K562 (cell line): ENCODE measurements at regions of chr18 and their contacts with region 1.

Region 1: GRCh38 chr18:305003-305501 is 37.2 kb upstream of the THOC1 start:
- DNase-seq: no peak
- ATAC-seq: peak; percentile 46
- H3K4me3 ChIP-seq: no peak overlapping the region
- H3K27ac ChIP-seq: no peak overlapping the region
- H3K4me1 ChIP-seq: peaks cover 0 to 19% of the 10 kb centered on the region in 2 experiments; a peak in 4 of 5 replicates
- H3K27me3 ChIP-seq: peaks cover 3 to 10% of the 10 kb centered on the region in 2 experiments; a peak in 2 of 5 replicates
- CTCF ChIP-seq: no peak
- EP300 ChIP-seq: no peak
- POLR2A ChIP-seq: no peak
- RAD21 ChIP-seq: no peak

Region 2: GRCh38 chr18:199768-200167 is 105.3 kb before region 1 on chr18:
- CTCF ChIA-PET with region 1: no interaction called
- POLR2A ChIA-PET with region 1: no interaction called
- in situ Hi-C with region 1: no loop called
- intact Hi-C with region 1: no loop called
- DNase-seq: no peak
- ATAC-seq: no peak
- H3K4me3 ChIP-seq: no peak overlapping the region
- H3K27ac ChIP-seq: no peak overlapping the region
- H3K4me1 ChIP-seq: no peaks in the 10 kb centered on the region
- H3K27me3 ChIP-seq: no peaks in the 10 kb centered on the region
- CTCF ChIP-seq: no peak
- EP300 ChIP-seq: no peak
- POLR2A ChIP-seq: no peak
- RAD21 ChIP-seq: no peak

Region 3: DNA sequence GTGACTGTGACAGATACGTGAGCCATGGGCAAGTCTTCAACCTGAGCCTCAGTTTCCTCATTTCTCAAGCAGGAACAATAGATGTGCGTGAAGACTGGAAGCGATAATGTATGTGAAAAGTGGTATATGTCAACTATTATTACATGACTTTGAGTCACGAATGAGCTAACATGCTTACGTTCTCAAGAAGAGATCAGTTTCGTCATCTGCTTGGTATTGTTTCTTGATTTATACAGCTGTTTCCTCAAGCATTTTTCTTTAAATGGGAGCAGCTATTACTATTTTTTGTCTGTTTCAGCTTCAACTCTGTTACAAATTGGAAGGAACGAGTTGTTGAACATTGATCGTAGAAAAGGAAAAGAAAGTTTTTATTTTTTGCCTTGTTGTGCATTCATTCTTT is 11.3 kb after region 1 on chr18:
- CTCF ChIA-PET with region 1: no interaction called
- POLR2A ChIA-PET with region 1: interaction called, 15 read pairs
- in situ Hi-C with region 1: no loop called
- intact Hi-C with region 1: no loop called
- DNase-seq: no peak
- ATAC-seq: no peak
- H3K4me3 ChIP-seq: no peak overlapping the region
- H3K27ac ChIP-seq: no peak overlapping the region
- H3K4me1 ChIP-seq: peaks cover 0 to 5% of the 10 kb centered on the region in 2 experiments; a peak in 2 of 5 replicates
- H3K27me3 ChIP-seq: peaks cover 39 to 51% of the 10 kb centered on the region in 2 experiments
- CTCF ChIP-seq: no peak
- EP300 ChIP-seq: no peak
- POLR2A ChIP-seq: no peak
- RAD21 ChIP-seq: no peak

Region 4: GRCh38 chr18:1691863-1692262 is 1386.8 kb after region 1 on chr18:
- CTCF ChIA-PET with region 1: no interaction called
- POLR2A ChIA-PET with region 1: no interaction called
- in situ Hi-C with region 1: no loop called
- intact Hi-C with region 1: no loop called
- DNase-seq: peak in 1 of 4 experiments; percentile 8
- ATAC-seq: peak; percentile 53; the same call in 2 of the 3 replicates
- H3K4me3 ChIP-seq: no peak overlapping the region
- H3K27ac ChIP-seq: no peak overlapping the region
- H3K4me1 ChIP-seq: no peaks in the 10 kb centered on the region
- H3K27me3 ChIP-seq: no peaks in the 10 kb centered on the region
- CTCF ChIP-seq: peak in 1 of 3 experiments; percentile 25; a peak in 1 of 6 replicates
- EP300 ChIP-seq: no peak
- POLR2A ChIP-seq: no peak
- RAD21 ChIP-seq: peak; percentile 13 to 27; a peak in 2 of 4 replicates